ENCODE measurements at regions of chr3 and their contacts with region 1.

Region 1: GRCh38 chr3:185558395-185558794 is 6.0 kb upstream of the LIPH start:
- DNase-seq: no peak
- ATAC-seq: no peak
- H3K4me3 Mint-ChIP-seq: no peak overlapping the region
- H3K27ac Mint-ChIP-seq: no peak overlapping the region
- H3K4me1 Mint-ChIP-seq: peaks cover 10% of the 10 kb centered on the region
- H3K27me3 Mint-ChIP-seq: peaks cover 4% of the 10 kb centered on the region
- CTCF ChIP-seq: no peak

Region 2: DNA sequence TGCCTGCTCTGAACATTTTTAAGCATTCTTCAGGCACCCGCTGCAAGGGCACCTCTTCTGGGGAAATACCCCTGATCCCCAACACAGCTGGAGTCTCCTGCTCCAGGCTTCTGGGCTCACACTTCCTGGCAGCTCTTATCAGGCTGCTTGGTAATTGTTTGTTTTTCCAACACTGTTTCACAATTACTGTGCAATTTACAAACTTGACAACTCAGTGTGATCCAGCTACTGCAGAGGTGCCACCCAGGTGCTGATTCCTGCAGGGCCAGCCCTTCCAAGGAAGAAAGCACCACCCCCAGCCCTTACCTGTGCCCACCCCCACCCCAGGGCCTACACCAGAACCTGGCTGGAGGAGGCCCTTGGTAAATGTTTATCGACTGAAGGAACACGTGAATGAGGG is 913.1 kb before region 1 on chr3:
- CTCF ChIA-PET with region 1: no interaction called
- POLR2A ChIA-PET with region 1: no interaction called
- intact Hi-C with region 1: no loop called
- DNase-seq: no peak
- ATAC-seq: no peak
- H3K4me3 Mint-ChIP-seq: no peak overlapping the region
- H3K27ac Mint-ChIP-seq: no peak overlapping the region
- H3K4me1 Mint-ChIP-seq: no peaks in the 10 kb centered on the region
- H3K27me3 Mint-ChIP-seq: peaks cover 4% of the 10 kb centered on the region
- CTCF ChIP-seq: no peak

Region 3: GRCh38 chr3:185353823-185354614 is 204.4 kb before region 1 on chr3:
- CTCF ChIA-PET with region 1: interaction called, 3 read pairs
- POLR2A ChIA-PET with region 1: interaction called, 6 read pairs
- intact Hi-C with region 1: loop called (anchors 5 kb)
- DNase-seq: peak; percentile 19
- ATAC-seq: peak; percentile 84
- H3K4me3 Mint-ChIP-seq: no peak overlapping the region
- H3K27ac Mint-ChIP-seq: no peak overlapping the region
- H3K4me1 Mint-ChIP-seq: no peaks in the 10 kb centered on the region
- H3K27me3 Mint-ChIP-seq: peaks cover 27% of the 10 kb centered on the region
- CTCF ChIP-seq: no peak

Region 4: GRCh38 chr3:185498503-185499396 is 59.6 kb before region 1 on chr3 and contains the start of gene TMEM41A:
- CTCF ChIA-PET with region 1: no interaction called
- POLR2A ChIA-PET with region 1: no interaction called
- intact Hi-C with region 1: loop called (anchors 1 kb)
- DNase-seq: peak; percentile 86
- ATAC-seq: peak; percentile 99
- H3K4me3 Mint-ChIP-seq: peak within 1 kb of the TSS; percentile 92
- H3K27ac Mint-ChIP-seq: peak within 1 kb of the TSS; percentile 73
- H3K4me1 Mint-ChIP-seq: peaks cover 19% of the 10 kb centered on the region
- H3K27me3 Mint-ChIP-seq: no peaks in the 10 kb centered on the region
- CTCF ChIP-seq: no peak
- total RNA-seq, gene TMEM41A: 20.7 and 23.3 TPM in 2 replicates

Region 5: GRCh38 chr3:185585859-185586685 is 27.7 kb after region 1 on chr3 and contains the start of gene SENP2:
- CTCF ChIA-PET with region 1: interaction called, 3 read pairs
- POLR2A ChIA-PET with region 1: no interaction called
- intact Hi-C with region 1: loop called (anchors 1 kb)
- DNase-seq: peak; percentile 98
- ATAC-seq: peak; percentile 95
- H3K4me3 Mint-ChIP-seq: peak within 1 kb of the TSS; percentile 97
- H3K27ac Mint-ChIP-seq: peak within 1 kb of the TSS; percentile 97
- H3K4me1 Mint-ChIP-seq: peaks cover 39% of the 10 kb centered on the region
- H3K27me3 Mint-ChIP-seq: no peaks in the 10 kb centered on the region
- CTCF ChIP-seq: no peak
- total RNA-seq, gene SENP2: 42.2 and 47.1 TPM in 2 replicates